Naive thymus-derived CD4-positive, alpha-beta T cell (primary cell): ENCODE measurements at regions of chr1 and their contacts with region 1.

Region 1: GRCh38 chr1:1115786-1116700 is at the start of gene C1orf159:
- DNase-seq: peak; percentile 96 to 99 (median 98)
- ATAC-seq: peak; percentile 97
- H3K4me3 ChIP-seq: peak within 1 kb of the TSS; percentile 59
- H3K4me3 Mint-ChIP-seq: peak within 1 kb of the TSS; percentile 74 to 90 (median 86)
- H3K27ac ChIP-seq: peak within 1 kb of the TSS; percentile 76
- H3K27ac Mint-ChIP-seq: peak within 1 kb of the TSS in 7 of 9 donors; percentile 66 to 90 (median 77)
- H3K4me1 ChIP-seq: peaks cover 0 to 4% of the 10 kb centered on the region in 2 donors
- H3K4me1 Mint-ChIP-seq: peaks cover 0 to 20% (median 13%) of the 10 kb centered on the region in 7 donors
- H3K27me3 ChIP-seq: no peaks in the 10 kb centered on the region
- H3K27me3 Mint-ChIP-seq: peaks cover 0 to 13% (median 0%) of the 10 kb centered on the region in 5 donors
- total RNA-seq, gene C1orf159: 17.6 to 21.9 (median 19.6) TPM

Region 2: DNA sequence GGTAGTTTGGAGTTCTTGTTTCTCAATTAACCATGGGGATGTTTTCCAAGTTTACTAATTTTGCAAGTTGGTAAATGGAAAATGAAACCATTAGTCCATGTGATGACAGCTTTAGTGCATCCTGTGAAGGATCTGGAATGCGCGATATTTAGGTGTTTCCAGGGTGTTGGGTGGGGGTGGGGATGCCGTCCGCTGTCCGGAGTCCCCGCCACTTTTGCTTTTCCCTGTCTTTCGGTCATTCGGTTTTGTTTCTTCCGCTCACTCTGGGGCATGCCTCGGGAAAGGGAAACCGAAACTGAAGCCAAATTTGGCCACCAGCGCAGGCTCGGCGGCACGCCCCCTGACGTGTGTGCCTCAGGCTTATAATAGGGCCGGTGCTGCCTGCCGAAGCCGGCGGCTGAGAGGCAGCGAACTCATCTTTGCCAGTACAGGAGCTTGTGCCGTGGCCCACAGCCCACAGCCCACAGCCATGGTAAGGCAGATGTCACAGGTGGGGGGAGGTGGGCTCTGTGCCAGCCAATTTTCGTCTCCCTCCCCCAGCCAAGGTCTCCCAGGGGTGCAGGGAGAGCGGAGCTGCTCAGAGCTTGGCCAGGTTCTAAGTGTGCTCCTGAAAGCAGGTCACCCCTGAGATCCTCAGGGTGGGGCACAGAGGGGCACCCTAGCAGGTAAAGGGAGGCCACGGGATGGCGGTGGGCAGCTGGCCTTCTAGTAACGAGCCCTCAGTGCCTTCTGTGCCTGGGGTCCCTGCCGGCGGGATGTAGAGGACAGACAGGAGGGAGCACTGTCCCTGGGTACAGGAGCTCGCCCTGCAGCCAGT is 102.7 kb before region 1 on chr1 and contains the start of gene ISG15:
- CTCF ChIA-PET with region 1: no interaction called
- POLR2A ChIA-PET with region 1: interaction called, 3 read pairs
- intact Hi-C with region 1: loop called (anchors 1 kb)
- DNase-seq: peak; percentile 73 to 90 (median 85)
- ATAC-seq: peak; percentile 98
- H3K4me3 ChIP-seq: peak within 1 kb of the TSS; percentile 95
- H3K4me3 Mint-ChIP-seq: peak within 1 kb of the TSS; percentile 89 to 100 (median 96)
- H3K27ac ChIP-seq: peak within 1 kb of the TSS; percentile 83
- H3K27ac Mint-ChIP-seq: peak within 1 kb of the TSS; percentile 96 to 100 (median 99)
- H3K4me1 ChIP-seq: peaks cover 13 to 18% of the 10 kb centered on the region in 2 donors
- H3K4me1 Mint-ChIP-seq: peaks cover 19 to 35% (median 29%) of the 10 kb centered on the region in 7 donors
- H3K27me3 ChIP-seq: no peaks in the 10 kb centered on the region
- H3K27me3 Mint-ChIP-seq: peaks cover 0 to 4% (median 1%) of the 10 kb centered on the region in 5 donors
- total RNA-seq, gene ISG15: 17.4 to 227 (median 25.4) TPM

Region 3: GRCh38 chr1:1040004-1040991 is 75.7 kb before region 1 on chr1:
- CTCF ChIA-PET with region 1: no interaction called
- POLR2A ChIA-PET with region 1: no interaction called
- intact Hi-C with region 1: loop called (anchors 1 to 2 kb)
- DNase-seq: peak; percentile 69 to 84 (median 81)
- ATAC-seq: peak; percentile 93
- H3K4me3 ChIP-seq: peak overlapping the region; percentile 52
- H3K4me3 Mint-ChIP-seq: peak overlapping the region; percentile 71 to 86 (median 80)
- H3K27ac ChIP-seq: peak overlapping the region; percentile 35
- H3K27ac Mint-ChIP-seq: peak overlapping the region in 7 of 9 donors; percentile 25 to 56 (median 41)
- H3K4me1 ChIP-seq: peaks cover 6 to 14% of the 10 kb centered on the region in 2 donors
- H3K4me1 Mint-ChIP-seq: peaks cover 5 to 18% (median 15%) of the 10 kb centered on the region in 7 donors
- H3K27me3 ChIP-seq: no peaks in the 10 kb centered on the region
- H3K27me3 Mint-ChIP-seq: peaks cover 3 to 27% (median 5%) of the 10 kb centered on the region in 5 donors

Region 4: DNA sequence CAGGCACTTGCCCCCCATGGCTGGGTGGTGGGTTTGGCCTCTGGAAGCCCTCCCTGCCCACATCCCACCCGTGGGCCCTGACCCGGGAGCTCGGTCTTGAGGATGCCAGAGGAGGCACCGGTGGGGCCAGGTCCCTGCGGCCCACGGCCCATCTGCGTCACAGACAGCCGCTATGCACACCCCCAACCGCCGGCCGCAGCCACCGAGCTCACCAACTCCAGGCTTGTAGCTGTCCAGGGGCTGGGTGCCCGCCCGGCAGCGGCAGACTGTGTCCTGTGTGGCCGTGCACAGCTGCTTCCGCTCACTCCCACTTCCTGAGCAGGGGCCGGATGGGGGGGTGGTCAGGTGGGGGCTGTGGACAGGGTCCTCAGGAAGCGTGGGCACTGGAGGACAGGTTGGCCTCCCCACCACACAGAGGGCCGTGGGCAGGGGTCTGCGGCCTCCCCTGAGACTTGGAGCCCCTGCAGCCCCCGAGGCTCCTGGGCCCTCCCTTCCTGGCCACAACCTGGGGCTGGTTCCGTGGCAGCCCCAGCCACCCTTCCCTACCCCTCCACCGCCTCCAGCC is 96.8 kb after region 1 on chr1:
- CTCF ChIA-PET with region 1: no interaction called
- POLR2A ChIA-PET with region 1: no interaction called
- intact Hi-C with region 1: loop called (anchors 2 to 5 kb)
- DNase-seq: peak in 2 of 9 donors; percentile 11 to 71
- ATAC-seq: peak; percentile 50
- H3K4me3 ChIP-seq: peak overlapping the region; percentile 43
- H3K4me3 Mint-ChIP-seq: peak overlapping the region in 4 of 10 donors; percentile 23 to 78 (median 69)
- H3K27ac ChIP-seq: peak overlapping the region; percentile 50
- H3K27ac Mint-ChIP-seq: peak overlapping the region in 1 of 9 donors; percentile 62
- H3K4me1 ChIP-seq: peaks cover 17 to 27% of the 10 kb centered on the region in 2 donors
- H3K4me1 Mint-ChIP-seq: peaks cover 6 to 44% (median 29%) of the 10 kb centered on the region in 7 donors
- H3K27me3 ChIP-seq: no peaks in the 10 kb centered on the region
- H3K27me3 Mint-ChIP-seq: no peaks in the 10 kb centered on the region

Region 5: GRCh38 chr1:1307908-1308755 is 192.1 kb after region 1 on chr1 and contains the starts of genes ACAP3 and PUSL1:
- CTCF ChIA-PET with region 1: interaction called, 3 read pairs
- POLR2A ChIA-PET with region 1: no interaction called
- intact Hi-C with region 1: loop called (anchors 1 kb)
- DNase-seq: peak; percentile 88 to 94 (median 91)
- ATAC-seq: peak; percentile 87
- H3K4me3 ChIP-seq: peak within 1 kb of the TSS; percentile 83
- H3K4me3 Mint-ChIP-seq: peak within 1 kb of the TSS; percentile 82 to 94 (median 88)
- H3K27ac ChIP-seq: peak within 1 kb of the TSS; percentile 90
- H3K27ac Mint-ChIP-seq: peak within 1 kb of the TSS; percentile 47 to 94 (median 89)
- H3K4me1 ChIP-seq: peaks cover 31 to 34% of the 10 kb centered on the region in 2 donors
- H3K4me1 Mint-ChIP-seq: peaks cover 11 to 24% (median 17%) of the 10 kb centered on the region in 7 donors
- H3K27me3 ChIP-seq: no peaks in the 10 kb centered on the region
- H3K27me3 Mint-ChIP-seq: no peaks in the 10 kb centered on the region
- total RNA-seq, gene ACAP3: 51.5 to 70.8 (median 58.2) TPM
- total RNA-seq, gene PUSL1: 17.7 to 25.4 (median 19.4) TPM

Region 6: DNA sequence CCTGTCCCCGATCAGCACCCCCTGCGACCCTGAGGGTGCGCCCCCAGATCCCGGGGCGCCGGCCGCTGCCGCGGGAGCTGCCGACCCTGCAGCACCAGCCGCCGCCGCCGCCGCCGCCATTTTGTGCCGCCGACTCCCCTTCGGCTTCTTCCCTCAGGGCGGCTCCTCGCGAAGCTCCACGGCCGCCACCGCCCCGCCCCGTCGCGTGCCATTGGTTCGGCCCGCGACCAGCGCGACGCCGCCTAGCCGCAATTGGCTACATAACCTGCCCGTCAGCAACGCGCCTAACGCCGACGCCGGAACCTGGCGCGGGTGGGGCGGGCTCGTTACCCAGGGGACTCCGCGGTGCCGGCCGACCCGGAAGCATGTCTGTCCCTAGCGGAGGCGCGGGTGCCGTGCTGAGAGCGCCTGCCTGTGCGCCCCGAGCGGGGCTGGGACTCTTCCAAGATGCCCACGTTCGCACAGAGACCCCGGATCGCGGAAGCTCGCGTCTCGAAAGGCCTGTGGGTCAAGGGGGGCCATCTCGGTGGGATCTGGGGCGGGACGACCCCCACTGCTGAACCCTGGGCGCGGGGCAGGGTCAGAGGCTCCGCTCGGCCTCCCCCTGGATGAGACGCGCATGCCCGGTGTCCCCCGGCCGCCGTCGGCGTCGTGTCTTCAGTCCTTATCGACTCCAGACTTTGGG is 283.3 kb after region 1 on chr1 and contains the start of gene CCNL2:
- CTCF ChIA-PET with region 1: no interaction called
- POLR2A ChIA-PET with region 1: no interaction called
- intact Hi-C with region 1: loop called in 1 of 2 experiments (anchors 1 kb)
- DNase-seq: peak; percentile 98 to 99 (median 99)
- ATAC-seq: peak; percentile 97
- H3K4me3 ChIP-seq: peak within 1 kb of the TSS; percentile 99
- H3K4me3 Mint-ChIP-seq: peak within 1 kb of the TSS; percentile 85 to 94 (median 90)
- H3K27ac ChIP-seq: peak within 1 kb of the TSS; percentile 91
- H3K27ac Mint-ChIP-seq: peak within 1 kb of the TSS; percentile 78 to 93 (median 89)
- H3K4me1 ChIP-seq: peaks cover 20 to 23% of the 10 kb centered on the region in 2 donors
- H3K4me1 Mint-ChIP-seq: peaks cover 22 to 65% (median 43%) of the 10 kb centered on the region in 7 donors
- H3K27me3 ChIP-seq: no peaks in the 10 kb centered on the region
- H3K27me3 Mint-ChIP-seq: no peaks in the 10 kb centered on the region
- total RNA-seq, gene CCNL2: 130 to 403 (median 278) TPM

Region 7: GRCh38 chr1:1890506-1891348 is 774.7 kb after region 1 on chr1 and contains the start of gene GNB1:
- CTCF ChIA-PET with region 1: no interaction called
- POLR2A ChIA-PET with region 1: no interaction called
- intact Hi-C with region 1: loop called in 1 of 2 experiments (anchors 1 kb)
- DNase-seq: peak; percentile 80 to 96 (median 93)
- ATAC-seq: peak; percentile 88
- H3K4me3 ChIP-seq: peak within 1 kb of the TSS; percentile 64
- H3K4me3 Mint-ChIP-seq: peak within 1 kb of the TSS; percentile 83 to 100 (median 90)
- H3K27ac ChIP-seq: peak within 1 kb of the TSS; percentile 96
- H3K27ac Mint-ChIP-seq: peak within 1 kb of the TSS; percentile 89 to 98 (median 95)
- H3K4me1 ChIP-seq: peaks cover 36 to 52% of the 10 kb centered on the region in 2 donors
- H3K4me1 Mint-ChIP-seq: peaks cover 41 to 76% (median 61%) of the 10 kb centered on the region in 7 donors
- H3K27me3 ChIP-seq: no peaks in the 10 kb centered on the region
- H3K27me3 Mint-ChIP-seq: peaks cover 0 to under 1% (median 0%) of the 10 kb centered on the region in 5 donors
- total RNA-seq, gene GNB1: 170 to 358 (median 246) TPM